ENCODE measurements at regions of chr12 and their contacts with region 1.

Region 1: DNA sequence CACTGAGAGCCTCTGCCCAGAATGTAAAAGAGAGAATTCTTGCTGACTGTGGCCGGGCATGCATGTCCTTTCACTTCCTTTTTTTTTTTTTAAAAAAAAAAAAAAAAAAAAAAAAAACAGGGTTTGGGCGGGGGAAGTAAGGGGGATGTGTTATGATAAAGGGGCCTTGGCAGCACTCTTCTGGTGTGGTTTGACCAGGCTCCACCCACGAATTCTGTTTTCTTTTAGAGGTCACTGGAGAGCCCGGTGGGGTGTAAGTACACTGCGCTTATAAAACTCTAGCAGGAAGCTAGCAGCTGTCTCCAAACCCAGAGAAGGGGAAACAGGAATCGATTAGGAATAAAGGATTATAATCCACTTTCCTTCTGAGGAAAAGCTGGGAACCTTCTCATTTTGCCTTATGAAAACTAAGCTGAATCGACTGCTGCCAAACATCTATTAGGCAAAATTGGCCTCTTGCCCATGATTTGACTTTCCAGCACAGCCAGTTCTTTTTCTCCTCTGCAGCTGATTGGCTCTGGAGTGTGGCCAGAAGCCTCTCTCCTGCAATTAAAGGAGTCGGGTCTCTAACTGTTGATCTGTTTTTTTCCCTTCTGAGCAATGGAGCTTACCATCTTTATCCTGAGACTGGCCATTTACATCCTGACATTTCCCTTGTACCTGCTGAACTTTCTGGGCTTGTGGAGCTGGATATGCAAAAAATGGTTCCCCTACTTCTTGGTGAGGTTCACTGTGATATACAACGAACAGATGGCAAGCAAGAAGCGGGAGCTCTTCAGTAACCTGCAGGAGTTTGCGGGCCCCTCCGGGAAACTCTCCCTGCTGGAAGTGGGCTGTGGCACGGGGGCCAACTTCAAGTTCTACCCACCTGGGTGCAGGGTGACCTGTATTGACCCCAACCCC is 27.7 kb upstream of the HIGD1C start:
- DNase-seq: peak; percentile 89 to 94
- ATAC-seq: peak; percentile 81 to 87 (median 83)
- H3K4me3 ChIP-seq: peak overlapping the region; percentile 78
- H3K27ac ChIP-seq: peak overlapping the region; percentile 76
- H3K4me1 ChIP-seq: peaks cover 53% of the 10 kb centered on the region
- H3K27me3 ChIP-seq: no peaks in the 10 kb centered on the region
- CTCF ChIP-seq: no peak

Region 2: GRCh38 chr12:50537538-50537919 is 387.2 kb before region 1 on chr12:
- intact Hi-C with region 1: no loop called
- DNase-seq: no peak
- ATAC-seq: no peak
- H3K4me3 ChIP-seq: no peak overlapping the region
- H3K27ac ChIP-seq: no peak overlapping the region
- H3K4me1 ChIP-seq: peaks cover 16% of the 10 kb centered on the region
- H3K27me3 ChIP-seq: no peaks in the 10 kb centered on the region
- CTCF ChIP-seq: no peak

Region 3: DNA sequence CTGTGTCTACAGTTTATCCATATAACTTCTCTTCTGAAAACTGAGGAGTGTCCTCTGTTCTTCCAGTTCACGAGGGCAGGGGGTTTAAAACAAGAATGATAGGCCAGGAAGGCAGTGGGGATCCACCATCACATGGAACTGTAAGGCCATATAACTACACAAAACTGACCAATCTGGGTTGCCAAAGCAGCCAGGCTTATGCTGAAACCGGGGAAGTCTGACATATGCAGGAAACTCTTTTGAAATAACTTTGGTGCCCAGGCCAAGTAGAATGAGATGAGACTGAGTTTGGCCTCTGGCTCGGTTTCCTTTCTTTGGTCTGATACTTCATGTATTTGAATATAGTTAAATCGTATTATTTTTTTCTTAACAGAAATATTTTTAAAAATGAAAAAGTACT is 178.8 kb before region 1 on chr12:
- intact Hi-C with region 1: no loop called
- DNase-seq: no peak
- ATAC-seq: no peak
- H3K4me3 ChIP-seq: no peak overlapping the region
- H3K27ac ChIP-seq: no peak overlapping the region
- H3K4me1 ChIP-seq: peaks cover 12% of the 10 kb centered on the region
- H3K27me3 ChIP-seq: no peaks in the 10 kb centered on the region
- CTCF ChIP-seq: no peak

Region 4: DNA sequence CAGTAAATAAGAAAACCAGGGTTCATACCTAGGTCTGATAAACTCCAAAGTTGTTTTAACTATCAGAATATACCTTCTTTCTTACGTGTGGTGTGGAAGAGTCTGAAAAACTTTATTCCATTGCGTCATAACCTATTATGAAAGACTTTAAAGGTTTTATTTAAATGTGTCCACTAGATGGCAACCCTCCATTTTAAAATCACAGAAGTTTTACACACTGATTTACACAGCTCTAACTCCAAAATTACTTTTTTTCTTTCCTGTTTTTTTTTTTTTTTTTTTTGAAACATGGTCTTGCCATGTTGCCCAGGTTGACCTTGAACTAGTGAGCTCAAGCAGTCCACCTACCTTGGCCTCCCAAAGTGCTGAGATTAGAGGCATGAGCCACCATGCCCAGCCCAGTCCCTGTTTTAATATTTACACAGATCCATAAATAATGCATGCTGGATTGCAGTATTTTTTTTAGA is 99.3 kb before region 1 on chr12:
- intact Hi-C with region 1: loop called (anchors 5 kb)
- DNase-seq: no peak
- ATAC-seq: peak; percentile 72 to 82 (median 78)
- H3K4me3 ChIP-seq: no peak overlapping the region
- H3K27ac ChIP-seq: peak overlapping the region; percentile 75
- H3K4me1 ChIP-seq: peaks cover 13% of the 10 kb centered on the region
- H3K27me3 ChIP-seq: no peaks in the 10 kb centered on the region
- CTCF ChIP-seq: peak; percentile 60

Region 5: GRCh38 chr12:50960130-50960529 is 35.4 kb after region 1 on chr12:
- intact Hi-C with region 1: no loop called
- DNase-seq: no peak
- ATAC-seq: no peak
- H3K4me3 ChIP-seq: no peak overlapping the region
- H3K27ac ChIP-seq: no peak overlapping the region
- H3K4me1 ChIP-seq: no peaks in the 10 kb centered on the region
- H3K27me3 ChIP-seq: no peaks in the 10 kb centered on the region
- CTCF ChIP-seq: no peak

Region 6: GRCh38 chr12:50979369-50980052 is 54.8 kb after region 1 on chr12:
- intact Hi-C with region 1: loop called (anchors 2 to 5 kb)
- DNase-seq: no peak
- ATAC-seq: no peak
- H3K4me3 ChIP-seq: no peak overlapping the region
- H3K27ac ChIP-seq: no peak overlapping the region
- H3K4me1 ChIP-seq: peaks cover 5% of the 10 kb centered on the region
- H3K27me3 ChIP-seq: no peaks in the 10 kb centered on the region
- CTCF ChIP-seq: no peak

Region 7: DNA sequence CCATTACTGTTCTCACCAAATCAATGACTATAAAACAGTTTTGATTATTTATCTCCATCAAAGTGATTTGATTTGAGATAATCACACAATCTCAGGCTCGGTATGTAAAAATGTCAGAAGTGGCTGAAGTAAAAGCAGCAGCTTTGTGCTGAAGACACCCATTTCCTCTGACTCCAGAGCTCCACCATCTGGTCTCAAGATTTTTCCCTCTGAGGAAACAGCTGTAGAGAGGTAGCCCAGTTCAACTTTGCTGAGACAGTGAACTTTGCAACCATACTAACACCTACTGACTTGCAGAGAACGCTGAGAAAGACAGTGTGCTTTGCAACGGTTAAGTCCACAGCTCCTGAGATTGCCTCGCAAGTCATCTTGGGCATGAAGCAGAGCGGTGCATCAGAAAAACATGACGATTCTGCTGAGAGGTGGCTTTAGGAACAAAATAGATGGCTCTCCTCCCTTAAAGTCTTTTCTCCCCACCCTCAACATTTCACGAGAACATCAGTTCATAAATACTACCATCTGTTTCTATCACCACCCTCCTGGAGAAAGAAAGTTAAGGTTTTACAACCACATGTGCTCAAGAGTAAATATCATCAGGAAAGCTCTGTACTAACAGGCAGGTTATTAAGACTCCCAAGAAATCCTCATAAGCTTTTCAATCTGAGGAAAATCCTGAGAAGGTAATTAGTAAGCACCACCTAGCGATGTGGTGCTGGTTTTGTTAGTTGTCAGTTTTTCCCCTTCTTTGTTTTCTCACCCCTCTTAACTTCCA is 62.5 kb after region 1 on chr12:
- intact Hi-C with region 1: loop called (anchors 2 to 5 kb)
- DNase-seq: no peak
- ATAC-seq: peak; percentile 42 to 73 (median 65)
- H3K4me3 ChIP-seq: no peak overlapping the region
- H3K27ac ChIP-seq: peak overlapping the region; percentile 82
- H3K4me1 ChIP-seq: peaks cover 25% of the 10 kb centered on the region
- H3K27me3 ChIP-seq: no peaks in the 10 kb centered on the region
- CTCF ChIP-seq: peak; percentile 65